Activated naive CD4-positive, alpha-beta T cell treated with anti-CD3 and anti-CD28 coated beads for 36 hours (primary cell): ENCODE measurements at regions of chr9 and their contacts with region 1.

Region 1: DNA sequence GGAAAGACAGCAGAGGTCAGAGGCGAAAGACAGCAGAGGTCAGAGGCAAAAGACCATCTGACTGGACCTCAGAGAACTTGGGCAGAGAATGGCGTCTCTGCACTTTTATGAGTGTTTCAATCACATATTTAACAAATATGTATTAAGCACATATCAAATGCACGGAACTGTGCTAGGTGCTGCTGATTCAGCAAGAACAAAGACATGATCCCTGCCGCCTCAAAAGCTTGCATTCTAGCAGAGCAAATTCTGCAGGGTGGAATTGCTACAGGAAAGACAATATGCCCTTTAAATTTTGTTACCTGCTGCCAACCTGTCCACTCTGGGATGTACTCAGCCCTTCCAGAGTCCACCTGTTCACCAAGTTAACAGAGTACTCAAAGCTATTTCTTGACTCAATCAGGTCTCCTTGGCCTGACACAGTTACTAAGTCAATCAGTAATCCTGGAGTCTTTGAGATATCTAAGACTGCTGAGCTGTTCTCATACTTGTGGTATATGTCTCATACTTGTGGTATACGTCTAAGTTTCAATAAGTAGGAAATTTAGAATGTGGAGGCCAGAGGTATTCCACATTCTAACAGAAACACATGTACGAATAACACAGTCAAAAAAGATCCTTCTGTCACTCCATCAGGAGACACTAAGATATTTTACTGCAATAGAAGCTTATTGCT is 131.8 kb downstream of the GNAQ start:
- DNase-seq: no peak
- H3K4me3 Mint-ChIP-seq: no peak overlapping the region
- H3K27ac Mint-ChIP-seq: no peak overlapping the region
- H3K4me1 Mint-ChIP-seq: peaks cover 26% of the 10 kb centered on the region
- H3K27me3 Mint-ChIP-seq: no peaks in the 10 kb centered on the region

Region 2: DNA sequence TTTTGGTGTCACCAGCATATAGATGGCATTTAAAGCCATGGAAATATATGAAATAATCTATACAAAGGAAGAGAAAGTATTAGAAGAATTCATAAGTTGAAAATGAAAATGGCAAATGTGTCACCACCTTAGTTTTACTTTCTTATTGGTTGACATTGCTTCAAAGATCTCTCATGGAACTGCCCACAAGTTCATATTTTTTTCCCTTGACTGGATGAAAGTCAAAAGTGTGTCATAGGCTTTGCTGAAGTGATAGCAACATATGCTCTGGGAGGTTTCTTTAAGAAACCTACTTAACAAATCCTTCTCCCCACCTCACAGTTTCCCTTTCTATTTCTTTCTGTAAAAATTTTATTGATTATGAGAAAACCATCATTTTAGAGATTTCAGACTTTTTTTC is 595.3 kb before region 1 on chr9:
- CTCF ChIA-PET with region 1: no interaction called
- intact Hi-C with region 1: loop called (anchors 10 kb)
- DNase-seq: no peak
- H3K4me3 Mint-ChIP-seq: no peak overlapping the region
- H3K27ac Mint-ChIP-seq: peak overlapping the region; percentile 53
- H3K4me1 Mint-ChIP-seq: peaks cover 13% of the 10 kb centered on the region
- H3K27me3 Mint-ChIP-seq: no peaks in the 10 kb centered on the region

Region 3: DNA sequence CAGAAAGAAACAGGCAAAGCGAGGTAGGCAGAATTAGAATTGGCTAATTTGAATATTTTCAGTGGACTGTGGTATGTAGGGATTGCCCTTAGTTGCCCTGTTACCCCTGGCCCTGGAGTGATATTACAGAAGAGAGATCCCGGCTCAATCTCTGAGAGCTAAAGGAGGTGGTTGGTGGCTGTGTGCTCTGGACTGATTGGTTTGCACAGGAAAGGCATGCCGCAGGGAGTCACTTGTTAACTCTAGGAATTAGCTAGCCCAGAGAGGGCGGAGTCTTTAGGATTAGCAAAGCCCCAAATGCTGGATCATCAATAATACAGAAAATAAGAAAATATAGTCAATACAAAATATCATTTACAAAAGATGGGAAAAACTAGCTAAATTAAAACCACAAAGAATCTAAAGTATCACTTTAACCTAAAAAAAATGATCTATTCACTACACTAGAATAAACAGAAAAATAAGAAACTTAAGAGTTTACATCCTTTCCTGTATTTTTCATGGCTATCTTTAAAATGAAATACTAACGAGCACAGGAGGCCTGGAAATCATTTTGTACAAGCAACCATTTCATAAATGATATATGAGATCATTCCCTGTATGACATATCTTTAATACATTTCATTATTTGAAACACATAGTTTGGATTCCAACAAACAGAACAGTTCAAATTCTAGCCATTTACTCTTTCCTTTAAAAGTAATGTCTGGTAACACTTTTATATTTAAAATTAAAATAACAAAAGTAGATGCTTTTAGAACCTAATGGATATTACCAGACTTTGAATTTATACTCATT is 60.7 kb after region 1 on chr9:
- CTCF ChIA-PET with region 1: no interaction called
- intact Hi-C with region 1: loop called (anchors 10 kb)
- DNase-seq: no peak
- H3K4me3 Mint-ChIP-seq: no peak overlapping the region
- H3K27ac Mint-ChIP-seq: no peak overlapping the region
- H3K4me1 Mint-ChIP-seq: peaks cover 50% of the 10 kb centered on the region
- H3K27me3 Mint-ChIP-seq: no peaks in the 10 kb centered on the region

Region 4: GRCh38 chr9:78035383-78035993 is 135.7 kb after region 1 on chr9:
- CTCF ChIA-PET with region 1: no interaction called
- intact Hi-C with region 1: no loop called
- DNase-seq: peak; percentile 69
- H3K4me3 Mint-ChIP-seq: peak overlapping the region; percentile 34
- H3K27ac Mint-ChIP-seq: no peak overlapping the region
- H3K4me1 Mint-ChIP-seq: peaks cover 28% of the 10 kb centered on the region
- H3K27me3 Mint-ChIP-seq: no peaks in the 10 kb centered on the region